MCF 10A (cell line): ENCODE measurements at regions of chr10 and their contacts with region 1.

Region 1: GRCh38 chr10:122374237-122374869 is at the start of gene PLEKHA1:
- DNase-seq: peak; percentile 93
- H3K4me3 Mint-ChIP-seq: peak within 1 kb of the TSS; percentile 93
- H3K27ac Mint-ChIP-seq: peak within 1 kb of the TSS; percentile 89
- H3K4me1 Mint-ChIP-seq: peaks cover 25% of the 10 kb centered on the region
- H3K27me3 Mint-ChIP-seq: no peaks in the 10 kb centered on the region
- CTCF ChIP-seq: peak; percentile 13
- total RNA-seq, gene PLEKHA1: 55.8 and 56.7 TPM in 2 replicates

Region 2: GRCh38 chr10:122307669-122308486 is 66.5 kb before region 1 on chr10:
- CTCF ChIA-PET with region 1: no interaction called
- POLR2A ChIA-PET with region 1: interaction called, 61 read pairs
- intact Hi-C with region 1: no loop called
- DNase-seq: peak; percentile 98
- H3K4me3 Mint-ChIP-seq: peak overlapping the region; percentile 64
- H3K27ac Mint-ChIP-seq: peak overlapping the region; percentile 94
- H3K4me1 Mint-ChIP-seq: peaks cover 22% of the 10 kb centered on the region
- H3K27me3 Mint-ChIP-seq: no peaks in the 10 kb centered on the region
- CTCF ChIP-seq: no peak

Region 3: DNA sequence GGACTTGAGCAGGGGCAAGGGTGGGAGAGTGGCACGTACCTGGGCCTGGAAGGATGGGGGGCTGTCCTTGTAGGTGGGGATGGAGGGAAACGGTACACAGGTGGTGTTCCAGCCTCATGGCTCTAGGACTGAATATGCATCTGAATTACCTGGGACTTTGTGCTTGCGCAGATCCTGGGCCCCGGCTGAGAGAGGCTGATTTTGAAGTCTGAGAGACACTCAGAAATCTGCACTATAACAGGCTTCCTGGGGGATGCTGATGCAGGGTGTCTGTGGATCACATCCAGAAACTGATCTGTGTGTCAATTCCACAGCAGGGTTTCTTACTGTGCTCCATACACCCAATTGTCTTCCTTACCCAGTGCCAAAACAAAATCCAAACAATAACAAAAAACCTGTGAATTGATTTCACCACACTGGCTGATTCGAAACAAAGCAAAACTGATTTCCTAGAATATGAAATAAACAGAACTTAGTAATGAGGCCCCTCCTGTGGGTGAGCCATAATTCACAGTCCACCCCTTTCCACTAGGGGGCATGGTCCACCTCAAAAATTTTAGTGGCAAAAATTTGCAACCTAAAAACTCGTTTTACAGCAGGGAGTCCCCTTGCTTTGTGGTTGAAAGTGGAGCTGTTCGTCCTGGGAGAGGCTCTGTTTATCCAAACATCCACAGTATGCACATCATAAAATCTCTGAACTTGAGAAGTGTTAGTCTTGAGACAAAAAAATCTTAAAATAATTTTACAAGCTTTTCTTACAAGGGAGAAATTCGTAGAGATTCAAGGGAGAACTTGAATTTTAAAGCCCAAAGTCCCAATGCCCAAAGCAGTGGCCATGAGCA is 31.8 kb before region 1 on chr10:
- CTCF ChIA-PET with region 1: interaction called, 6 read pairs
- POLR2A ChIA-PET with region 1: interaction called, 12 read pairs
- intact Hi-C with region 1: no loop called
- DNase-seq: peak; percentile 72
- H3K4me3 Mint-ChIP-seq: no peak overlapping the region
- H3K27ac Mint-ChIP-seq: no peak overlapping the region
- H3K4me1 Mint-ChIP-seq: peaks cover 12% of the 10 kb centered on the region
- H3K27me3 Mint-ChIP-seq: no peaks in the 10 kb centered on the region
- CTCF ChIP-seq: peak; percentile 54

Region 4: DNA sequence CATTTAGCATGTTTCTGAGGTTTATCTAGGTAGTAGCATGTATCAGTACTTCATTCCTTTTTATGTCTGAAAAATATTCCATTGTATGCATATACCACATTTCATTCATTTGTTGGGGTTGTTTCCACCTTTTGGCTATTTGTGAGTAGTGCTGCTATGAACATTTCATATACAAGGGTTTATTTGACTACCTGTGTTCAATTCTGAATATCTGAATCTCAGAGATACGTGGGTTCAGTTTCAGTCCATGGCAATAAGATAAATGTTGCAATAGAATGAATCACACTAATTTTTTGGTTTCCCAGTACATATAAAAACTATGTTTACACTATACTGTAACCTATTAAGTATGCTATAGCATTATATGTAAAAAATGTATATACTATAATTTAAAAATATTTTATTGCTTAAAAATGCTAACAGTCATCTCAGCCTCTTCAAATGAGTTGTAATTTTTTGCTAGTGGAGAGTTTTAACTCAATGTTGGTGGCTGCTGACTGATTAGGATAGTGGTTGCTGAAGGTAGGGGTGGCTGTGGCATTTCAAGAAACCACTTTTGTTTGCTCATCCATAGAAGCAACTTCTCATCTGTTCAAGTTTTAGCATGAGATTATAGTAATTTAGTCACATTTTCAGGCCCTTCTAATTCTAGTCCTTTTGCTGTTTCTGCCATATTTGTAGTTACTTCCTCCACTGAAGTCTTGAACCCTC is 14.1 kb after region 1 on chr10:
- CTCF ChIA-PET with region 1: interaction called, 6 read pairs
- POLR2A ChIA-PET with region 1: interaction called, 22 read pairs
- intact Hi-C with region 1: no loop called
- DNase-seq: peak; percentile 35
- H3K4me3 Mint-ChIP-seq: no peak overlapping the region
- H3K27ac Mint-ChIP-seq: no peak overlapping the region
- H3K4me1 Mint-ChIP-seq: peaks cover 18% of the 10 kb centered on the region
- H3K27me3 Mint-ChIP-seq: no peaks in the 10 kb centered on the region
- CTCF ChIP-seq: no peak

Region 5: GRCh38 chr10:122468926-122469781 is 94.8 kb after region 1 on chr10:
- CTCF ChIA-PET with region 1: no interaction called
- POLR2A ChIA-PET with region 1: interaction called, 19 read pairs
- intact Hi-C with region 1: no loop called
- DNase-seq: peak; percentile 99
- H3K4me3 Mint-ChIP-seq: peak overlapping the region; percentile 40
- H3K27ac Mint-ChIP-seq: peak overlapping the region; percentile 82
- H3K4me1 Mint-ChIP-seq: peaks cover 41% of the 10 kb centered on the region
- H3K27me3 Mint-ChIP-seq: no peaks in the 10 kb centered on the region
- CTCF ChIP-seq: no peak

Region 6: GRCh38 chr10:123678376-123678775 is 1304.0 kb after region 1 on chr10:
- CTCF ChIA-PET with region 1: no interaction called
- POLR2A ChIA-PET with region 1: no interaction called
- intact Hi-C with region 1: no loop called
- DNase-seq: no peak
- H3K4me3 Mint-ChIP-seq: no peak overlapping the region
- H3K27ac Mint-ChIP-seq: no peak overlapping the region
- H3K4me1 Mint-ChIP-seq: no peaks in the 10 kb centered on the region
- H3K27me3 Mint-ChIP-seq: peaks cover 66% of the 10 kb centered on the region
- CTCF ChIP-seq: no peak